ENCODE measurements at regions of chr14 and their contacts with region 1.

Region 1: GRCh38 chr14:69586404-69586803 is 11.7 kb upstream of the CCDC177 start:
- DNase-seq: no peak
- ATAC-seq: no peak
- H3K4me3 ChIP-seq: no peak overlapping the region
- H3K27ac ChIP-seq: no peak overlapping the region
- H3K4me1 ChIP-seq: peaks cover 10% of the 10 kb centered on the region
- H3K27me3 ChIP-seq: no peaks in the 10 kb centered on the region
- CTCF ChIP-seq: no peak

Region 2: GRCh38 chr14:69726761-69727511 is 140.5 kb after region 1 on chr14:
- intact Hi-C with region 1: loop called (anchors 5 kb)
- DNase-seq: peak; percentile 92
- ATAC-seq: peak; percentile 97
- H3K4me3 ChIP-seq: peak overlapping the region; percentile 50
- H3K27ac ChIP-seq: peak overlapping the region; percentile 79
- H3K4me1 ChIP-seq: peaks cover 14% of the 10 kb centered on the region
- H3K27me3 ChIP-seq: no peaks in the 10 kb centered on the region
- CTCF ChIP-seq: peak; percentile 98